Aorta (tissue), 5 donors: ENCODE measurements at regions of chr5 and their contacts with region 1.

Region 1: GRCh38 chr5:168765551-168766425 is 186.6 kb upstream of the PANK3 start:
- DNase-seq: peak; percentile 73 to 87
- ATAC-seq: peak; percentile 60
- H3K4me3 ChIP-seq: no peak overlapping the region
- H3K27ac ChIP-seq: no peak overlapping the region
- H3K4me1 ChIP-seq: no peaks in the 10 kb centered on the region
- H3K27me3 ChIP-seq: no peaks in the 10 kb centered on the region

Region 2: GRCh38 chr5:168734620-168735300 is 31.0 kb before region 1 on chr5:
- intact Hi-C with region 1: loop called in 1 of 2 experiments (anchors 2 kb)
- DNase-seq: peak; percentile 70 to 91
- ATAC-seq: peak; percentile 87
- H3K4me3 ChIP-seq: no peak overlapping the region
- H3K27ac ChIP-seq: peak overlapping the region; percentile 11 to 28
- H3K4me1 ChIP-seq: peaks cover 0 to 5% of the 10 kb centered on the region in 2 donors
- H3K27me3 ChIP-seq: no peaks in the 10 kb centered on the region

Region 3: GRCh38 chr5:168843277-168844015 is 77.7 kb after region 1 on chr5:
- intact Hi-C with region 1: no loop called
- DNase-seq: no peak
- ATAC-seq: peak; percentile 13
- H3K4me3 ChIP-seq: no peak overlapping the region
- H3K27ac ChIP-seq: no peak overlapping the region
- H3K4me1 ChIP-seq: peaks cover 0 to 7% of the 10 kb centered on the region in 2 donors
- H3K27me3 ChIP-seq: no peaks in the 10 kb centered on the region